Prostate gland (tissue), 2 donors: ENCODE measurements at regions of chr15 and their contacts with region 1.

Region 1: DNA sequence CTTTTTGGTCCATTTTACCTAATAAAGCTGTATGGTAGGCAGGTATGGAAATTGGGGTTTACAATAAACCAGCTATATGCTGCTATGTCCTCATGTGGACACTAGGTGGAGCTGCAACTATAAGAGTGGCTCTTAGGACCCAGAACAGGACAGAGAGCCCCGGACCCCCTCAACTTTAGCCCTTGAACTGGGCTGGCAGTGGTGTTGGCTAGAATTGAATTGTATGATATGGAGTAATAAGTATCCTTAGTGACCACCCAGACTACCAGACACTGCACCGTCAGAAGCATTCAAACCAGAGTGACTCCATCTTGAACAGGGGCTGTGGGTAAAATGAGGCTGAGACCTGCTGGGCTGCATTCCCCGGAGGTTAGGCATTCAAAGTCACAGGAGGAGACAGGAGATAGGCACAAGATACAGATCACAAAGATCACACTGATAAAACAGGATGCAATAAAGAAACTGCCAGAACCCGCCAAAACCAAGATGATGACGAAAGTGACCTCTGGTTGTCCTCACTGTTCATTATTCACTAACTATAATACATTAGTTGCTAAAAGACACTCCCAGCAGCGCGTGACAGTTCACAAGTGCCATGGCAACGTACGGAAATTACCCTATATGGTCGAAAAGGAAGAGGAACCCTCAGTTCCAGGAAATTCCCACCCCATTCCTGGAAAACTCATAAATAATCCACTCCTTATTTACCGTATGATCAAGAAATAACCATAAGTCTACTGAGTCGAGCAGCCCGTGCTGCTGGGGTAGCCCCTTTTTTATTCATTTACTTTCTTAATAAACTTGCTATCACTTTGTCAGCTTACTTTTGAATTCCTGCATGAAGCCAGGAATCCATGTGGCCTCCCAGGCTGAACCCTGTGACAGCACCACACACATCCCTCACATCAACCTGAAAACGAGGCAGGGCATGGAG is 68.7 kb upstream of the BLM start:
- DNase-seq: peak; percentile 68
- H3K4me3 ChIP-seq: no peak overlapping the region
- H3K27ac ChIP-seq: peak overlapping the region in 1 of 2 donors; percentile 64
- H3K4me1 ChIP-seq: no peaks in the 10 kb centered on the region
- H3K27me3 ChIP-seq: no peaks in the 10 kb centered on the region
- CTCF ChIP-seq: peak; percentile 89 to 91 (median 90)
- POLR2A ChIP-seq: no peak

Region 2: DNA sequence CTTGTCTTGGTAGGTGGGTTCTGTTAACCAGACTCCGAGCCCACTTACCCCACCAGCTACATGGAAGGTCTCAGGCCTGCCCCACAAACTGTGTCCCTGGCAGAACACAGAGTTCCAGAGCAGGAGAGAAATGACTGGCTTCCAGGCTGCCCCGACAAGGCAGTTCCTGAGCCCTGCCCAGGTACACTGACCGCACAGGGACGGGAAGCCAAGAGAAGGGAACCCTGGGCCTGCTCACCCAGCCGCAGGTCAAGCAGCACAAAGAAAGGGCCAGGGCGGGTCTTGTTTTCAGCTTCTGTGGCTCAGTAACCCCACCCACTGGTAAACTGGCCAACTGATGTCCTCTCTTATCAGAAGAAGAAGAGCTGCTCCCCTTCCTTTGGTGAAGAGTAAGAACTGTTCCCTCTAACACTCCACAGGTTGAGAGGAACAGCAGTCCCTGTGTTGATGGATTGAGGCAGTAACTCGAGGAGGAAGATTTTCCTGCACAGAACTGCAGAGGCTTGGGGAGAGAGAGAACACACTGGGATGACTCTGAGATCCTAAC is 50.3 kb before region 1 on chr15:
- intact Hi-C with region 1: no loop called
- DNase-seq: no peak
- H3K4me3 ChIP-seq: no peak overlapping the region
- H3K27ac ChIP-seq: peak overlapping the region; percentile 4 to 19
- H3K4me1 ChIP-seq: peaks cover 13% of the 10 kb centered on the region
- H3K27me3 ChIP-seq: no peaks in the 10 kb centered on the region
- CTCF ChIP-seq: no peak
- POLR2A ChIP-seq: no peak

Region 3: DNA sequence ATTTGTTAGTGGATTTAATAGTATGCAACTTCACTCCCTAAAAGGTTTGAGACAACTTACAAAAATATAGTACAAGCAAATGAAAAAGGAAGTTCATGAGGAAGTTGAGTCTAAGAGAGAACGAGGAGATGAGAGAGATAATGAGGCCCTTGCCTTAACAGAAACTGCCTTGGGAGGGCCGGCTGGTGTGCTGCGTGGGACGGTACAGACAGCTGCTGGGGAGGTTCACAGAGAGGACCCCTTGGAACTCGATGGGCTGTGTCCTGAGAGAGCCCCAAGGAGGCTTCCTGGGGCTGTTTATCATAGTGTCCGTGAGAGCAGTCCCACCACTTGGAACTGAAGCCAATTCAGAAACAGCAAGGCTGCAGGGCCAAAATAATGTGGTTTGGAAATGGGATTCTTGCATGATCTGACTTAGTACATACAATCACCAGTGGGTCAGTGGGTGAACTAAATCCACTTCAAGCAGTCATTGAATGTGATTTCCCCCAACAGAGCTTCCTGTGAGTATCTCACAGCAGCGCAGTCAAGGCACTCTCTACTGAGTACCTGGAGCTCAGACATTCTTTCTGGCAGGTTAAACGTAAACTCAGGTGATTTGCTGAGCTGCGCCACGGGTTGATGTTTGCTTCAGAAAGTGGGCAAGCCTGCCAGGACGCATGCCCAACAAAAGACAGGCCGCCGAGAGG is 27.9 kb before region 1 on chr15:
- intact Hi-C with region 1: no loop called
- DNase-seq: no peak
- H3K4me3 ChIP-seq: no peak overlapping the region
- H3K27ac ChIP-seq: no peak overlapping the region
- H3K4me1 ChIP-seq: no peaks in the 10 kb centered on the region
- H3K27me3 ChIP-seq: no peaks in the 10 kb centered on the region
- CTCF ChIP-seq: no peak
- POLR2A ChIP-seq: no peak

Region 4: DNA sequence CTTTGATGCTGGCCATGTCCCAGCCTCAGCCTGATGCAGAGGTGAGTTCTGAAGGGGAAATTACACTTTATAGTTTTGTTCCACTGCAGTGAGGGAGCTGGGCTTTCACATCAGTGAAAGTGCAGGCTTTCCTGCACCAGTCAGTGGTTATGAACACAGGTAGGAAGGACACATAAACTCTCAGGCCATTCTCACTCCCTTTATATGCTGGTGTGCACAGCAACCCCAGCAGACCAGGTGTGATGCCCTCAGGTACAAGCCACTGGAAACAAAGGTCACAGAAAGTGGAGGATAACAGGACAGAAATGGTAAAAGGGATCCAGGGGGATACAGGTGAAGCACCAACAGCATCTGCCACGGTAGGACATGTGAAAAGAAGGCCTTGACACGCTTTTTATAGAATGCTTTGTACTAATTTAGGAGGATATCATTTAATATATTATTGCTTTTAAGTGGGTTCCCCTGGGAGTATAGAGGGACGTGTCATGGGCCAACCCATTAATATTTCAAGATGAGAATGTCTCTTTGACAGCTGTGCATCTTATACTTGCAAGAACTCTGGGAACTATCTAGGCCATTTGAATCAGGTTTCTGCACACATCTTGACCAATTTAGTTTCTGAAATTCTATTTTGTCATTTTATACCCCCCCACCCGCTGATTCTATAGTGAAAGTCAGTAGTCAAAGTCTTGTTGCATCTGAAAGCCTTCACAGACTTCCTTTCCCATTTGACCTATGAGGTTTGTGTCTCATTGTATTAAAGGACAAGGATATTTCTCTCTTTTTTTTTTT is 43.8 kb after region 1 on chr15:
- intact Hi-C with region 1: loop called (anchors 5 kb)
- DNase-seq: no peak
- H3K4me3 ChIP-seq: no peak overlapping the region
- H3K27ac ChIP-seq: no peak overlapping the region
- H3K4me1 ChIP-seq: no peaks in the 10 kb centered on the region
- H3K27me3 ChIP-seq: no peaks in the 10 kb centered on the region
- CTCF ChIP-seq: no peak
- POLR2A ChIP-seq: no peak

Region 5: DNA sequence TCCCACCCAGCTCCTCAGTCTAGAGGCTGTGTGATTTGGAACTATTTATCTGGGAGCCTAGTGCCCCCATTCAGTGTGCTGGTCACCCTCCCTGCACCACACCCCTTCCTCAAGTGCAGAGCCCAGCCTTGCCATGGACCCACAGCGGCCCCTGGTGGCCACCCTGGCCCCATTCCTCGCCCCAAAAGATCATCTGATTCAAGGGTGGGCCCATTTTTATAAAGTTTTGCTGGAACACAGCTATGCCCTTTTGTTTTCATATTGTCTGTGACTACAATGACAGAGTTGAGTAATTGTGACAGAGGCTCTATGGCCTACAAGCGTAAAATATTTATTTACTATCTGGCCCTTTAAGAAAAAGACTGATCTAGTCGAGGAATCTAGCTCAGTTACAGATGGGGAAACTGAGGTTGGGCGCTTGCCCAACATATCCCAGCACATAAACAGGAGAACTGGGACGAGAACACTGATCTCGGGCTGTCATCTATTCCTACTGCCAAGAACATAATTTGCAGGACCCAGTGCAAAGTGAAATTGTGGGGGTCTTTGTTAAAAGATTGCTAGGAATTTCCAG is 237.7 kb after region 1 on chr15:
- intact Hi-C with region 1: loop called (anchors 2 kb)
- DNase-seq: peak; percentile 59
- H3K4me3 ChIP-seq: no peak overlapping the region
- H3K27ac ChIP-seq: peak overlapping the region; percentile 78 to 86
- H3K4me1 ChIP-seq: peaks cover 6% of the 10 kb centered on the region
- H3K27me3 ChIP-seq: no peaks in the 10 kb centered on the region
- CTCF ChIP-seq: peak; percentile 93 to 97 (median 96)
- POLR2A ChIP-seq: no peak